ENCODE measurements at regions of chrX and their contacts with region 1.

Region 1: DNA sequence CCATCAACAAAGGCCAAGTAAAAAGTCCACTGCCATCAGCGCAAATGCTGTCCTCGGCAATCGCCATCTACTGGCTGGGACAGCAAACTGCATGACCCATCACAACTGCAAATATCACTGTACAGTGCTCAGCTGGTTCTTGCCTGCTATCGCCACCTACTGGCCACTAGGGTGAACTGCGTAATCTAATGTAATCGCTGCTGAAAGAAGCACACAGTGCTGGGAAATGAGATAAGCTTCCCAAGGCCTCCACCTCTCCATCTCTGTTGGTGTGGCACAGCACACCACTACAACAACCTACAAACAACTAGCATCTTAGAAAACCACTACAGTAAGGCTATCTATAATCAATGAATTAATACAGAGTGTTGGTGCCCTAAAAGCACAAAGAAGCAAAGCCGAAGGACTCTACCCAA is 298.3 kb downstream of the TEX13A start:
- DNase-seq: peak; percentile 31
- ATAC-seq: peak; percentile 98
- H3K4me3 ChIP-seq: no peak overlapping the region
- H3K27ac ChIP-seq: no peak overlapping the region
- H3K4me1 ChIP-seq: no peaks in the 10 kb centered on the region
- H3K27me3 ChIP-seq: no peaks in the 10 kb centered on the region
- CTCF ChIP-seq: peak; percentile 99 to 100 (median 99); a peak in 5 of 6 replicates
- EP300 ChIP-seq: no peak
- POLR2A ChIP-seq: no peak
- RAD21 ChIP-seq: peak; percentile 74

Region 2: DNA sequence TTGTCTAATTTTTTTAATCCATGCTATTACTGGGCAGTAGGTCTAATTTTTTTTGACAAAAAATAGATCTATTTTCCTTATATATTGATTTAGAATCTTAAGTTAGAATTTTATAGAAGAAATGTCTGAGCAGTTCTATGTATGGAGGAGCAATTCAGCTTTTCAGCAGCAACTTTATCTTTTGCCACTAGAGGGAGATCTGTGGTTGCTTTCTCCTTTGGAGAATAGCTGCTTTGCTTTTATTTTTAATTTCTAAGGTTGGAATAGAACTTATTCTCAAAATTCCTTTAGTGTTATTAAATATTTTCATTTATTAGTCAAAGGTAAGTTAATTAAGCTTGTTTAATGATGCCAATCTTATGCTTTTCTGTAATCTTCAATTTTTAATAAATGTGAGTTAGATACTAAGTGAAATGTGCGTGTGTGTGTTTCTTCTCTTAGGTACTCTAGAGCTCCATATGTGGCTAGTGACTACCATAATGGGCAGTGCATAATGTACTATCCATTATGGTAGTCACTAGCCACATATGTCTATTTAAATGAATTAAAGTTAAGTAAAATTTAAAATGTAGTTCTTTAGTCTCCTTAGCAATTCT is 726.6 kb before region 1 on chrX:
- CTCF ChIA-PET with region 1: interaction called, 9 read pairs
- POLR2A ChIA-PET with region 1: no interaction called
- RAD21 ChIA-PET with region 1: interaction called, 3 read pairs
- SMC1A ChIA-PET with region 1: no interaction called
- in situ Hi-C with region 1: no loop called
- intact Hi-C with region 1: loop called (anchors 5 kb)
- DNase-seq: no peak
- ATAC-seq: peak; percentile 79
- H3K4me3 ChIP-seq: no peak overlapping the region
- H3K27ac ChIP-seq: no peak overlapping the region
- H3K4me1 ChIP-seq: no peaks in the 10 kb centered on the region
- H3K27me3 ChIP-seq: no peaks in the 10 kb centered on the region; a peak in 1 of 4 replicates
- CTCF ChIP-seq: peak; percentile 62 to 63 (median 62)
- EP300 ChIP-seq: no peak
- POLR2A ChIP-seq: no peak
- RAD21 ChIP-seq: peak; percentile 61

Region 3: GRCh38 chrX:104386690-104387089 is 535.5 kb before region 1 on chrX:
- CTCF ChIA-PET with region 1: no interaction called
- POLR2A ChIA-PET with region 1: no interaction called
- RAD21 ChIA-PET with region 1: no interaction called
- SMC1A ChIA-PET with region 1: no interaction called
- in situ Hi-C with region 1: no loop called
- intact Hi-C with region 1: no loop called
- DNase-seq: no peak
- ATAC-seq: no peak
- H3K4me3 ChIP-seq: no peak overlapping the region
- H3K27ac ChIP-seq: no peak overlapping the region
- H3K4me1 ChIP-seq: no peaks in the 10 kb centered on the region
- H3K27me3 ChIP-seq: no peaks in the 10 kb centered on the region
- CTCF ChIP-seq: no peak
- EP300 ChIP-seq: no peak
- POLR2A ChIP-seq: no peak
- RAD21 ChIP-seq: no peak

Region 4: DNA sequence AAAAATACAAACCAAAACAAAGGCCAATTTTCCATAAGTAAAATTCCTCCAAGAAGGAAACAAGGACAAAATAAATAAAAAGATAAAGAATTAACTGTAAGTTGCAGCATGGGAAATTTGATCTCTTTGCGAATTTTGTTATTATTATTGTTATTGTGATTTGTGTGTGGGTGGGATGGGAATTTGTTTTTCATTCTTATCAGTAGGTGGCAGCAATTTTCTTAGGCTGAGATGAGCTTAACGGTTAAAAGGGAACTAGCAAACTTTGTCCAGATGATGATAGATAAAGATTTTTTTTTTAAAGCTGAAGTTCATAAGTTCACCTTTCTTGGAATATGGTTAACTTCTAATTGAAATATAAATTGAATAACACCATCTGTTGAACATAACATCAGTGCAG is 439.5 kb before region 1 on chrX:
- CTCF ChIA-PET with region 1: interaction called, 3 read pairs
- POLR2A ChIA-PET with region 1: no interaction called
- RAD21 ChIA-PET with region 1: no interaction called
- SMC1A ChIA-PET with region 1: no interaction called
- in situ Hi-C with region 1: no loop called
- intact Hi-C with region 1: loop called (anchors 10 kb)
- DNase-seq: no peak
- ATAC-seq: no peak
- H3K4me3 ChIP-seq: no peak overlapping the region
- H3K27ac ChIP-seq: no peak overlapping the region
- H3K4me1 ChIP-seq: no peaks in the 10 kb centered on the region
- H3K27me3 ChIP-seq: no peaks in the 10 kb centered on the region
- CTCF ChIP-seq: peak in 1 of 3 experiments; percentile 17; a peak in 2 of 6 replicates
- EP300 ChIP-seq: no peak
- POLR2A ChIP-seq: no peak
- RAD21 ChIP-seq: 0 out of 2 replicates have a peak, but pooled peaks have one; percentile 24

Region 5: DNA sequence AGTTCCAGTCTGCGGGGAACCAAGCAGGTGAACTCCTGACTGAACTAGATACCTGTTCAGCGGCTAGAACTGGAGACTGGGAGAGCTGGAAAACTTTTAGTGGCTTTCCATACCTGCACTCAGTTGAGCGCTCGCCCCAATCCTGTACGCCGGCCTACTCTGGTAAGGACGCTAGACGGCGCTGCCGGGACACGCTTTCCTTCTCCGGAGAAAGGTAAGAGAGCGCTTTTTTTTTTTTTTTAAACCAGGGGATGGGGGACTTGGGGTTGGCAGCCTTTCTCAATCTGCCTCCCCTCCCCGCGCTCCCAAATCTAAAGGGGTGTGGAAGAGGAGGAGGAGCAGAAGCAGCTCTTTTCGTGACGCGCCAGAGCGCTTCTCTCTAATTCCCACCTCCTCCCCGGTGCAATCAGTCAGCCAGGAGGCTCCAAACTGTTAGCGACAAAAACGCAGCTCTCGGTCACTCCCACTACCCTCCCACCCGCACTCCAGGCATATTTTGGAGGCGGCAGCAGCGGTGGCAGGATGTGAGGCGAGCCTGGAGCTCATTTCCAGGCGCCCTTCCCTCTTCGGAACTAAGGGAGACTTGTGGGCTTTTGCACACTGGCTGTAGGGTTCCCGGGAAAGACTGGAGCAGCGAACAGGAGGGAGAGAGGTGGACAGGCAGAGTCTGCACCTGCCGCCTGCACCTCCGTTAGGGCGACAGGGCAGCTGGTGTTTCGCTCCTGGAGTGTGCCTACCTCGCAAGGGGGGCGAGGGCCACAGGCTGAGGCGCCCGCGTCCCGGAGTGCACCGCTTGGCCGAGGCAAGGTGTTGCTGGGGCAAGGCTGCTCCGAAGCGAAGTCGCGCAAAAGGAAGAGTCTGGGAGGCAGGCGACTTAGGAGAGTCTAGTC is 356.2 kb before region 1 on chrX and contains the start of gene IL1RAPL2:
- CTCF ChIA-PET with region 1: interaction called, 5 read pairs
- POLR2A ChIA-PET with region 1: no interaction called
- RAD21 ChIA-PET with region 1: no interaction called
- SMC1A ChIA-PET with region 1: no interaction called
- in situ Hi-C with region 1: no loop called
- intact Hi-C with region 1: loop called (anchors 5 kb)
- DNase-seq: no peak
- ATAC-seq: peak; percentile 62; the same call in 2 of the 3 replicates
- H3K4me3 ChIP-seq: no peak within 1 kb of the TSS
- H3K27ac ChIP-seq: no peak within 1 kb of the TSS
- H3K4me1 ChIP-seq: no peaks in the 10 kb centered on the region
- H3K27me3 ChIP-seq: peaks cover 0 to 2% of the 10 kb centered on the region in 2 experiments; a peak in 2 of 4 replicates
- CTCF ChIP-seq: peak; percentile 28 to 43 (median 36); a peak in 5 of 6 replicates
- EP300 ChIP-seq: no peak
- POLR2A ChIP-seq: no peak
- RAD21 ChIP-seq: 0 out of 2 replicates have a peak, but pooled peaks have one; percentile 34
- polyA plus RNA-seq, gene IL1RAPL2: not detected

Region 6: DNA sequence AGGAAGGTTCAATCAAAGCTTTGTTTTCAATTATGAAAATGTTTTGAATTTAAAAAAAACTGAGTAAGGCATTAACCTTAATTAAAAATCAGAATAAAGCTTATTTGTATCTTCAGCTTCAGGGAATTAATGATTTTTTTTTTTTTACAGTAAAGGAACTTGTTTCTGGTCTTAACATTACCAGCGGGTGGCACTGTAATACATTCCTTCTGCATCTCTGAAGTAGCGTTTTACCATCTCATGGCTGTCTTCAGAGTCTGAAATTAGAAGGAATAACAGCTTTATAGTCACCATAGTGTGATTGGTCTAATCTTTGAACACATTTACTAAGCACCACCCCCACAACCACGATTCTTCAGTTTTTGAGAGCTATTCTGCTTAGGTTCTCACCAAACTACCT is 253.7 kb before region 1 on chrX:
- CTCF ChIA-PET with region 1: interaction called, 26 read pairs
- POLR2A ChIA-PET with region 1: no interaction called
- RAD21 ChIA-PET with region 1: interaction called, 6 read pairs
- SMC1A ChIA-PET with region 1: interaction called, 7 read pairs
- in situ Hi-C with region 1: no loop called
- intact Hi-C with region 1: loop called (anchors 1 kb)
- DNase-seq: no peak
- ATAC-seq: no peak
- H3K4me3 ChIP-seq: no peak overlapping the region
- H3K27ac ChIP-seq: no peak overlapping the region
- H3K4me1 ChIP-seq: no peaks in the 10 kb centered on the region
- H3K27me3 ChIP-seq: no peaks in the 10 kb centered on the region
- CTCF ChIP-seq: peak in 1 of 3 experiments; percentile 23; a peak in 1 of 6 replicates
- EP300 ChIP-seq: no peak
- POLR2A ChIP-seq: no peak
- RAD21 ChIP-seq: peak; percentile 28; the same call in 1 of the 2 replicates

Region 7: GRCh38 chrX:104902070-104902469 is 20.1 kb before region 1 on chrX:
- CTCF ChIA-PET with region 1: interaction called, 13 read pairs
- POLR2A ChIA-PET with region 1: no interaction called
- RAD21 ChIA-PET with region 1: no interaction called
- SMC1A ChIA-PET with region 1: no interaction called
- in situ Hi-C with region 1: no loop called
- intact Hi-C with region 1: no loop called
- DNase-seq: no peak
- ATAC-seq: no peak
- H3K4me3 ChIP-seq: no peak overlapping the region
- H3K27ac ChIP-seq: no peak overlapping the region
- H3K4me1 ChIP-seq: no peaks in the 10 kb centered on the region
- H3K27me3 ChIP-seq: no peaks in the 10 kb centered on the region
- CTCF ChIP-seq: no peak
- EP300 ChIP-seq: no peak
- POLR2A ChIP-seq: no peak
- RAD21 ChIP-seq: no peak

Region 8: GRCh38 chrX:105006103-105006502 is 83.9 kb after region 1 on chrX:
- CTCF ChIA-PET with region 1: no interaction called
- POLR2A ChIA-PET with region 1: no interaction called
- RAD21 ChIA-PET with region 1: no interaction called
- SMC1A ChIA-PET with region 1: no interaction called
- in situ Hi-C with region 1: no loop called
- intact Hi-C with region 1: no loop called
- DNase-seq: no peak
- ATAC-seq: no peak
- H3K4me3 ChIP-seq: no peak overlapping the region
- H3K27ac ChIP-seq: no peak overlapping the region
- H3K4me1 ChIP-seq: no peaks in the 10 kb centered on the region
- H3K27me3 ChIP-seq: no peaks in the 10 kb centered on the region
- CTCF ChIP-seq: no peak
- EP300 ChIP-seq: no peak
- POLR2A ChIP-seq: no peak
- RAD21 ChIP-seq: no peak

Region 9: DNA sequence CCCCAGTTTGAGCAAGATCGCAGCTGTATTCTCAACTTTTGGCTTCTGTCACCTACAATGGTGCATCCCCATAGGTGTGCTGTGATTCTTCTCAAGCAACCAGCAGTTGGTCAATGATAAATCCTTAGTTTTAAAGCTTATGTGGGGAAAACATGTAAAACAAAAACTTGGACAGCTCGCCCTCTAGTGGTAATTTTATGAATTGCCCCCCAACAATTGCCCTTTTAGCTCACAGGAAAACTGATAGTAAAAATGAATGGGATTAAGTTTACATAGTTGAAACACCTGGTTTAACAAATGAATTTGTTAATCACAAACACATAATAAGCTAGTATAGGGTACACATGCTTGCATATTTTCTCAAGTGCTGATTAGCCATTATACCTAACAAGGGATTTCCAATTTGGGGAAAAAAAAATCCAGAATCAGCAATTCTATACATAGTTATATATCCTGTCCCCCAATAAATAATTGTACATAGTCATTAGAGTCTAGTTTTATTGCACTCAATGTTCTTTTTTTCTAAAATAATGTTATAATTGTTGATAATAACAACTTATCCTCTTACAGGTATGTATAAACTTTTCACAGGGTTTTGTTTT is 268.1 kb after region 1 on chrX:
- CTCF ChIA-PET with region 1: interaction called, 7 read pairs
- POLR2A ChIA-PET with region 1: interaction called, 3 read pairs
- RAD21 ChIA-PET with region 1: no interaction called
- SMC1A ChIA-PET with region 1: no interaction called
- in situ Hi-C with region 1: no loop called
- intact Hi-C with region 1: loop called (anchors 2 kb)
- DNase-seq: no peak
- ATAC-seq: no peak
- H3K4me3 ChIP-seq: no peak overlapping the region
- H3K27ac ChIP-seq: no peak overlapping the region
- H3K4me1 ChIP-seq: no peaks in the 10 kb centered on the region
- H3K27me3 ChIP-seq: no peaks in the 10 kb centered on the region; a peak in 1 of 4 replicates
- CTCF ChIP-seq: peak; percentile 62 to 91 (median 69)
- EP300 ChIP-seq: no peak
- POLR2A ChIP-seq: no peak
- RAD21 ChIP-seq: peak; percentile 35; the same call in 1 of the 2 replicates

Measured in GM12878 (cell line).